Right ventricle myocardium inferior (tissue), 1 donor: ENCODE measurements at regions of chr9 and their contacts with region 1.

Region 1: DNA sequence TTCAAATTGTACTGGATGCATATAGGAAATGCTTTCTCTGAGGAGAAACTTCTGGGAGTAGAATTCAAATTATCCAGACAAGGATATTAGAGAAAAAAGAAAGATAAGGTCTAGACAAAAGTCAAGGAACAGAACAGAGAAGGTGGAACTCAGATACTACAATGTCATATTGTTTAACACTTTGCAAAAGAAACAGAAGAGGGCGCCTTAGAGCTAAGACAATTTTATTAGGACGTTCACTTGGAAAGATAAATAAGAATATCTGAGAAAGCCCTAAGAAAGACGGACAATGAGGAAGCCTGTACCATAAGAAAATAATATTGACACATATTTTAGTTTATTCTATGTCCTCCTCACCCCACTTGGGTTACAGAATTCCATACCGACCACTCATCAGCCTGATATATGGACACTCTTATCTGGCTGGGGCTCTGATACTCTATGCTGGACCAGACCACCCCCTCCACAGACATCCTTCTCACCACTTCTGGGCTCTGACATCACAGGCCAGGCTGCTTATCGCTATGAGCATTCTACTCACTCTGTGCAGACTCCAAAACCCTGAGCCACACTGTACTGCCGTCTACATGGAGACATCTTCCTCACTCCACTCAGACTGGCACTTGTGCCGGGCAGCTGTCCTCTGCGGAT is 9.1 kb upstream of the AK3 start:
- DNase-seq: no peak
- ATAC-seq: no peak

Region 2: GRCh38 chr9:5593904-5594303 is 843.8 kb after region 1 on chr9:
- intact Hi-C with region 1: loop called (anchors 10 kb)
- DNase-seq: no peak
- ATAC-seq: no peak